ENCODE measurements at regions of chr11 and their contacts with region 1.

Region 1: GRCh38 chr11:130314750-130315285 is at the start of gene ZBTB44:
- DNase-seq: peak; percentile 98
- total RNA-seq, gene ZBTB44: 37.0 TPM

Region 2: DNA sequence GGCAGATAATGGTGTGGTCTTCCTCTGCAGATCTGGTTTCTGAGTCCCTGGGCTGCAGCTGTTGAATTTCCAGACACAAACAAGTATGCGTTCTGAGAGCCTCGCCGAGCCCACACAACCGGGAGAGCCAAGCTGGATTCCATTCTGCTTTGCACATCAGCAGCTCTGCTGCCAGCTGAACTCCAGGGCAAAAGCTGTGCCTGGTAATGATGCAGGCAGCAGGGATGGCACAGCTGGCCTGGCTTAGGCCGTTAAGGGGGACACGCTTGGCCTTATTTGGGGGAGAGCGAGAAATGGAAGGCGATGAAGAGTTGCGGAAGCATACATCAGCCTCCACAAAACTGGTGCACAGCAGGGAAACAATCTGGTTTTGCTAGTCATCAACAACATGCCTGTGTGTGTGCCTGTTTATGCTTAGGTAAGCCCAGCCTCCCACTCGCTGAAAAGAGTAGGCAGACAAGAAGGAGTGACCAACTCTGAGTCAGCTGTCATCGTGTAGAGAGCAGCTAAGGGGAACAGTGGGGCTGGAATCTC is 88.5 kb after region 1 on chr11:
- intact Hi-C with region 1: loop called (anchors 5 kb)
- DNase-seq: peak; percentile 81

Measured in cardiac septum (tissue), 1 donor.